ENCODE measurements at regions of chr11 and their contacts with region 1.

Region 1: GRCh38 chr11:59429924-59430516 is 3.8 kb upstream of the OR5A2 start:
- H3K4me3 Mint-ChIP-seq: no peak overlapping the region
- H3K27ac Mint-ChIP-seq: no peak overlapping the region
- H3K4me1 Mint-ChIP-seq: no peaks in the 10 kb centered on the region
- H3K27me3 Mint-ChIP-seq: no peaks in the 10 kb centered on the region

Region 2: GRCh38 chr11:59289356-59290181 is 140.5 kb before region 1 on chr11:
- intact Hi-C with region 1: loop called (anchors 5 kb)
- H3K4me3 Mint-ChIP-seq: peak overlapping the region; percentile 52
- H3K27ac Mint-ChIP-seq: peak overlapping the region; percentile 80
- H3K4me1 Mint-ChIP-seq: peaks cover 32% of the 10 kb centered on the region
- H3K27me3 Mint-ChIP-seq: peaks cover 2% of the 10 kb centered on the region

Measured in dendritic cell treated with granulocyte-macrophage colony-stimulating factor and Interleukin-4, amounts not matched to agents 40 ng/mL and 50 ng/mL, for 4 days (primary cell).